Activated CD4-positive, alpha-beta memory T cell treated with anti-CD3 and anti-CD28 coated beads for 36 hours (primary cell): ENCODE measurements at regions of chr11 and their contacts with region 1.

Region 1: GRCh38 chr11:121451986-121452608 is at the start of gene SORL1:
- DNase-seq: peak; percentile 86
- H3K4me3 Mint-ChIP-seq: peak within 1 kb of the TSS; percentile 87
- H3K27ac Mint-ChIP-seq: peak within 1 kb of the TSS; percentile 93
- H3K4me1 Mint-ChIP-seq: peaks cover 86% of the 10 kb centered on the region
- H3K27me3 Mint-ChIP-seq: no peaks in the 10 kb centered on the region
- total RNA-seq, gene SORL1: 48.1 to 49.3 TPM

Region 2: GRCh38 chr11:121236115-121237001 is 215.7 kb before region 1 on chr11:
- CTCF ChIA-PET with region 1: no interaction called
- POLR2A ChIA-PET with region 1: no interaction called
- intact Hi-C with region 1: loop called (anchors 1 kb)
- DNase-seq: no peak
- H3K4me3 Mint-ChIP-seq: no peak overlapping the region
- H3K27ac Mint-ChIP-seq: peak overlapping the region; percentile 19
- H3K4me1 Mint-ChIP-seq: peaks cover 29% of the 10 kb centered on the region
- H3K27me3 Mint-ChIP-seq: peaks cover 22% of the 10 kb centered on the region

Region 3: DNA sequence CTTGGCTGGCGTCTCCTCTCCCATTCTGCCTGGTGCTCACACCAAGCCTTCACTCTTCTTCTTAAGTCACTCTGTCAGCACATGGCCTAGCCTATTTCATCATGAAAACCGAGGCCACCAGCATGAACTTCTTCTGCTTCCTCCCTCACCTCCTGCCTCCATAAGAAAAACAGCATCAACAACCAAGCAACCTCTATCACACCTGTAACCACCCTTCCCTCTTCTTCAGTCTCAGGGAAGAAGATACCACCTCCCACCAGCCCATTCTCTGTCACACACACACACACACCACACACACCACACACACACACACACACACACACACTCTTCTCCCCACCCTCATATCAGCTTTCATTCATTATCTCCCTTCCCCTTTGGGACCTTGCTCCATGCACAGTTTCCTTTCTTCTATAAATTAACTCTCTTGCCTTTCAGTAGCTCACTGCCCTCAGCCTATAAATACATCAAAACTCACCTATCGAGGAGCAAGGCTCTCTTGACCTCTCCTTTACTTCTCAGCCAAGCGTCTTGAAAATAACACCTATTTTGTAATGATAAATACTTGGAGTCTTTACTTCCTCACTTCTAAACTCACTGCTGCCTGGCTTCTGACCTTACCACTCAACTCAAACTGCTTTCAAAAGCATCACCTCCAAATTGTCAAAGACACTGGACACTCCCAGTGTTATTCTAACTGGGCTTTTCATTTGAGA is 123.0 kb before region 1 on chr11:
- CTCF ChIA-PET with region 1: interaction called, 3 read pairs
- POLR2A ChIA-PET with region 1: no interaction called
- intact Hi-C with region 1: loop called (anchors 2 kb)
- DNase-seq: peak; percentile 33
- H3K4me3 Mint-ChIP-seq: no peak overlapping the region
- H3K27ac Mint-ChIP-seq: no peak overlapping the region
- H3K4me1 Mint-ChIP-seq: peaks cover 8% of the 10 kb centered on the region
- H3K27me3 Mint-ChIP-seq: no peaks in the 10 kb centered on the region

Region 4: GRCh38 chr11:121437018-121437685 is 14.9 kb before region 1 on chr11:
- CTCF ChIA-PET with region 1: interaction called, 4 read pairs
- POLR2A ChIA-PET with region 1: interaction called, 4 read pairs
- intact Hi-C with region 1: loop called (anchors 2 kb)
- DNase-seq: no peak
- H3K4me3 Mint-ChIP-seq: no peak overlapping the region
- H3K27ac Mint-ChIP-seq: peak overlapping the region; percentile 59
- H3K4me1 Mint-ChIP-seq: peaks cover 46% of the 10 kb centered on the region
- H3K27me3 Mint-ChIP-seq: no peaks in the 10 kb centered on the region

Region 5: GRCh38 chr11:121482231-121483129 is 30.4 kb after region 1 on chr11:
- CTCF ChIA-PET with region 1: interaction called, 3 read pairs
- POLR2A ChIA-PET with region 1: interaction called, 5 read pairs
- intact Hi-C with region 1: loop called (anchors 1 kb)
- DNase-seq: peak; percentile 74
- H3K4me3 Mint-ChIP-seq: peak overlapping the region; percentile 75
- H3K27ac Mint-ChIP-seq: peak overlapping the region; percentile 96
- H3K4me1 Mint-ChIP-seq: peaks cover 47% of the 10 kb centered on the region
- H3K27me3 Mint-ChIP-seq: no peaks in the 10 kb centered on the region

Region 6: GRCh38 chr11:121591405-121592033 is 139.4 kb after region 1 on chr11:
- CTCF ChIA-PET with region 1: interaction called, 15 read pairs
- POLR2A ChIA-PET with region 1: no interaction called
- intact Hi-C with region 1: loop called (anchors 1 kb)
- DNase-seq: peak; percentile 76
- H3K4me3 Mint-ChIP-seq: no peak overlapping the region
- H3K27ac Mint-ChIP-seq: peak overlapping the region; percentile 52
- H3K4me1 Mint-ChIP-seq: peaks cover 25% of the 10 kb centered on the region
- H3K27me3 Mint-ChIP-seq: no peaks in the 10 kb centered on the region